ENCODE measurements at regions of chr20 and their contacts with region 1.

Region 1: DNA sequence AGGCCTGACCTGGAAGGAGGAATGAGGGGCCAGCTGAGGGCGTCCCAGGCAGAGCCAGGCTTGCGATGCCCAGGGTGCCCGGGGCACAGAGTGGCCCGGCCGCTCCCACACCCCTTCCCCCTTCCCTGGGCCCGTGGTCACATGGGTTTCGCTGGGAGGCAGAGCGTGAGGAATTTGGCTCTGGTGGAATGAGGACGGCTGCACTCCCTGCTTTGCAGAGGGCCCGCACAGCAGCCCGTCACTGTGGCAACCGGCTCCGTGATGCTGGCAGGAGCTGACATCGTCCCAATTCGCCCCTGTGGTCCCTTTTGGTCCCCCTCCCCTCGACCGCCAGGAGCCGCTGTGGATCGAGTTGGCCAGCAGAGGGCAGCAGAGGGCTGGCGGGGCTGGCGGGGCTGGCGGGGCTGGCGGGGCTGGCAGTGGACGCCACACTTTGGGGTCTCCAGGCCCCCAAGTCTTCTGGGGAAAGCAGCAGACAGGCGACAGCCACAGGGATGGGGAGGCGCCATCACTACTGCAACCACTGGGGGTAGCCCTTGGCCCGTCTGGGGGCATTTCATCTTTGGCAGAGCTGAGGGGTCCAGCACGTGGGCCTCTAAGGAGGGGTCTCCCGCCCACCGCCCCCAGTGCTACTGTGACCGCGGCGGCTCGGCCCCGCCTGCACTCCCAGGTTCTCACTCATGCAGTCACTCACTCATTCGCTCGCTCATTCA is 49.6 kb upstream of the BHLHE23 start:
- DNase-seq: peak; percentile 63
- H3K4me3 ChIP-seq: no peak overlapping the region
- H3K27ac ChIP-seq: no peak overlapping the region
- H3K4me1 ChIP-seq: peaks cover 0 to 9% (median 3%) of the 10 kb centered on the region in 4 donors
- H3K27me3 ChIP-seq: peaks cover 10 to 76% (median 39%) of the 10 kb centered on the region in 3 donors
- CTCF ChIP-seq: peak; percentile 73 to 97 (median 86)
- EP300 ChIP-seq: no peak
- POLR2A ChIP-seq: no peak

Region 2: DNA sequence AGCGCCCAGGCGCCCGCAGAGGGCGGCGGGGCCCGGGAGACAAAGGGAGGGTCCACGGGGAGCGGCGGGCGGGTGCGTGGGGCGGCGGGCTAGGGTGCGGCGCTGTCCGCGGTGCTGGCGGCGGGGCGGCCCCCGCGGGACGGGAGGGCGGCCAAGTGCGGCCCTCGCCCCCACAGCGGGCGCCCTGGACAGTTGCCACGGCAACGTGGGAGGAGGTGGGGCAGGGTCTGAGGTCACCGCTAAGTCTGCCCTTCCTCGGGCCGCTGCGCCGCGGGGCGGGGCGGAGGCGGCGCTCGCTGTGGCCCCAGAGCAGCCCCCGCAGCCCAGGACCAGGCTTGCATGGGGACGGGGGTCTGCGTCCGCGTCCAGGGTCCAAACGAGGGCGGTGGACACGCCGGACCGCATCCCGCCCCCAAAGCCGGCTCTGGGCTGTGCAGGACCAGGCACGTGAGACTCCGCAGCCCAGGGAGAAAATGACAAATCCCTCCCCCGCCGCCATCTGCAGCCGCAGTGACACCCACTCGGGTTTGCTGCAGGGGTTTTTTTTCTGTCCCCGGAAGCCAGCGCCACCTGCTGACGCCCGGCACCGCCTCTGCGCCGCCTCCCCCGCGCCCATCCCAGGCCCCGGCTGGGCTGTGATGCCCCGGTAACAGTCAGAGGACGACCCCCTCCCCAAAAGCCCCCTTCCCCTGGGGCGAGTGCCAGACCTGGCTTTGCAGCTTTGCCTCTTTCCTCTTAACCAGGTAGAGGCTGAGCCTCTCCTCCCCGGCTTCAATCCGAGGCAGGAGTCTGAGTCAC is 122.7 kb after region 1 on chr20:
- intact Hi-C with region 1: loop called (anchors 1 kb)
- DNase-seq: no peak
- H3K4me3 ChIP-seq: peak overlapping the region in 3 of 4 donors; percentile 5 to 31 (median 16)
- H3K27ac ChIP-seq: no peak overlapping the region
- H3K4me1 ChIP-seq: peaks cover 0 to 50% (median 35%) of the 10 kb centered on the region in 4 donors
- H3K27me3 ChIP-seq: peaks cover 56 to 90% (median 80%) of the 10 kb centered on the region in 3 donors
- CTCF ChIP-seq: peak in 1 of 4 experiments; percentile 44
- EP300 ChIP-seq: no peak
- POLR2A ChIP-seq: no peak

Region 3: DNA sequence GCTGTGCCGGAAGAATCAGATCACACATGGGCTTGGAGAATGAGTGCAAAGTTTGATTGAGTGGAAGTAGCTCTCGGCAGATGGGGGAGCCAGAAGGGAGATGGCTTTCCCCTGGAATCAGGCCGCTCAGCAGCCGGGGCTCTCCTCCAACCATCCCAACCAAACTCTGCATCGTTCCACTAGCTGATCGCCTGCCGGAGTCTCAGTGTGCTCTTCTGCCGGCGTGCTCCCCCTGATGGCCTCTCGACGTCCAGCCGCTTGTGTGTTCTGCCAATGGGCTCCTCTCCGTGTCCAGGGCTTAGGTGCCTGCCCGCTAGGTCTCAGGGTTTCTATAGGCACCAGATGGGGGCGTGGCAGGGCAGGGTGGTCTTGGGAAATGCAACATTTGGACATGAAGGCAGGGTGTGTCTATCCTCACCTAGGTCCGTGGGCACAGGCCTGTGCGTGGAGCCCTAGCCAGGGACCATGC is 174.4 kb after region 1 on chr20:
- intact Hi-C with region 1: loop called (anchors 1 kb)
- DNase-seq: peak; percentile 78
- H3K4me3 ChIP-seq: no peak overlapping the region
- H3K27ac ChIP-seq: no peak overlapping the region
- H3K4me1 ChIP-seq: peaks cover 0 to 4% (median 0%) of the 10 kb centered on the region in 4 donors
- H3K27me3 ChIP-seq: peaks cover 0 to 49% (median 12%) of the 10 kb centered on the region in 3 donors
- CTCF ChIP-seq: peak; percentile 20 to 54 (median 44)
- EP300 ChIP-seq: no peak
- POLR2A ChIP-seq: no peak

Measured in sigmoid colon (tissue), 7 donors.